Lower leg skin (tissue), 4 donors: ENCODE measurements at regions of chr11 and their contacts with region 1.

Region 1: GRCh38 chr11:35003658-35004057 is 87.2 kb downstream of the PDHX start:
- DNase-seq: no peak
- H3K4me3 ChIP-seq: no peak overlapping the region
- CTCF ChIP-seq: no peak
- POLR2A ChIP-seq: no peak

Region 2: DNA sequence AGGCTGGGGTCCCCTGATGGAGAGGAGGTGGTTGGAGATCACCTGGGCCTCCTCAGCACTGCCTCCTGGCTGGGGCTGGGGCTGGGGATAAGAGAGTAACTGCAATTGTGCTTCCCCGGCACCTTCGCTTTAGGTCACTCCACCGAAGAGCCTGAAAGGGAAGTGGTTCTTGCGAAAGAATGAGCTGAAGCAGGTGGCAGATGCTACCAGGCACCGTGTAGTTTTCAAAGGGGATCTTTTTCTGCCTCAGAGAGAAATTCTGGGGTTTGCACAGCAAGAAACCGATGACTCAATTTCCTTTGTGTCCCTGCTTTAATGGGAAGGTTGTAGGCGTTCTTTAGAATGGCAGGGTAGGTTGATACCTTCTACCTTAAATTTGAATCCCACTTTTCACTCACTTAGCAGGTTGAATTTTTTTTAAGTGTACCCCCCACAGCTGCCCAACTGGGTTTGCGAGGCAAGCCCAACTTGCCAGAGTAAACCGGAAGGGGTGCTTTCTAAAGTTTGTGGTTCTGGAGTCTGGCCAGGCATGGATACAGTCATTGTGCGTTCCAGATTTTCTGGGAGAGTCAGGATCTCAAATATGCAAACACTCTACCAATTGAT is 140.6 kb after region 1 on chr11:
- intact Hi-C with region 1: loop called (anchors 5 kb)
- DNase-seq: no peak
- H3K4me3 ChIP-seq: no peak overlapping the region
- CTCF ChIP-seq: no peak
- POLR2A ChIP-seq: no peak

Region 3: GRCh38 chr11:35192347-35192746 is 188.7 kb after region 1 on chr11:
- intact Hi-C with region 1: no loop called
- DNase-seq: no peak
- H3K4me3 ChIP-seq: no peak overlapping the region
- CTCF ChIP-seq: no peak
- POLR2A ChIP-seq: no peak